ENCODE measurements at regions of chr5 and their contacts with region 1.

Region 1: DNA sequence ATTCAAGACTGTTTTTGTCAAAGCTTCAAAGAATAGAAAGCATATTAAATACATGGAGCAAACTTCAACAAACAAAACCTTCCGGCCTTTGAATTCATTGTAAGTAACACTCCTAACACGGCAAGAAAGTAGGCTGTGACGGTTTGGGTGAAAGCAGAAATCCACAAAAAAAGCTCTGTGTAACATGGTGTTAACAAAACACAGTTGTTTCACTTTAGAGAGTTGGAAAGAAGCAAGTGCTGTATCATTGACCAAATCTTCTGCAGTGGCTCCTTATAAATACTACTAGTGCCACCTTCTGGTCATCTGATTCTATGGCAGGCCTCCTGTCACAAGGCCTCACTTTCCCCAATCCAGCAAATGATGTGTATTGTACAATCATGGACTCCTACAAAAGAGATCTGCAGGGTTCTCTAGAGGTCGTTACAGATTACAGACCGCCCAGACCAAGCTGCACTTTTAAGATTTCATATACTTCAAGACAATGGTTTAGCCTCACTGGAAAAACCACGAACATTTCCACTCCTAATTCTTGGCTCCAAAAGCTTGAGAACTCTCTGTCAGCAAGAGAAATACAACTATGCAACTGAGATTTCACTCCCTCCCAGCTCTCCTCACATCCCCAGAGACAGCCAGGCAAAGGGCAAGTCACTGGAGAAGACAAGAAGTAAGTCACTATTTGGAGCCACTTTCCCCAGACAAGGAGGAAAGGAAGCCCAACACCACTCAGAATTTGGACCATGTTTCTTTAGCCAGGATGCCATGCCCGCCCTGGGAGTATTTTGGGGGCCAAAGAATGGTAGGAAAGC is 196.2 kb downstream of the DTWD2 start:
- DNase-seq: peak in 1 of 2 donors; percentile 41
- ATAC-seq: peak; percentile 72 to 93 (median 84)
- H3K4me3 ChIP-seq: peak overlapping the region in 3 of 10 donors; percentile 3 to 24 (median 11)
- H3K27ac ChIP-seq: peak overlapping the region in 3 of 10 donors; percentile 16 to 48 (median 25)
- H3K4me1 ChIP-seq: peaks cover 0 to 26% (median 9%) of the 10 kb centered on the region in 9 donors
- H3K27me3 ChIP-seq: no peaks in the 10 kb centered on the region
- CTCF ChIP-seq: peak; percentile 64 to 92 (median 80)

Region 2: DNA sequence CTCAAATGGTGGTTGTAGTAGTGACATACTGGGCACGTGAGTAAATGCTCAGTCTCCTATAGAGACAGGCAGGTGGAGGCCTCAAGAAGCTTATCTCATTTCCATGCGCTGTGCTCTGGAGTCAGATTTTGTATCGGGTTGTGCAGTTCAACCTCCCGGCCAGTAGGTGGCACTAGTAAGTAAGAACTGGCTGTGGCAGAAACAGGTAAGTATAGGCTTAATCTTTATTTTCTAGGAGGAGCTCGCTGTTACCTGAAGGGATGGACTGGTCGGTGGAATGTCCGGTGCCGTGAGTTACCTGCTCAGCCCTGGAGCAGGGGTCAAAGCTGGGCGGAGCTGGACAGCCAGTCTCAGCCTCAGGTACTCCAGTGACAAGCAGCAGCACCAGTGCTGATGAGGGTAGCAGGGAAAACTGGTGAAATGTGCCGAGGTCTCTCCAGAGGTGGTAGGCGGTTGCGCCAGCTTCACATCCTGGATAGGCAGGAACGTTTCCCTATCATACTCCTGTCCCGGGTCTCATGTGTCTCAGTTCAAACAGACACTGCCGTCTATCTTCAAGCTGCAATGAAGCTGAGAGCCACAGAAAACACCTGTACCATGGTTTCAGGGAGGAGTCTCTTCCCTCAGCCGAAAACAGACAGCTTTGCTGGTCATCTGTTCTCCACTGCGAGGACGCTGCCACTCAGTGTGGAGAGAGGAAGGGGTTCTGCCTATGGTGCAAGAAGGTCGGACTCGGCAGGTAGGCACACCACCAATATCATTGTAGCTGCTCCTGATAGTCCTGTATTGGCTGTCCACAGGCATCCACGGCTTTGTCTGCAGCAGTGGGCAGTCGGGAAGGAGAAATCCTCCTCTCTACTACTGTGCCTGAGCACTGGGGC is 1337.2 kb before region 1 on chr5:
- intact Hi-C with region 1: loop called in 6 of 10 experiments (anchors 5 to 10 kb)
- DNase-seq: peak in 1 of 2 donors; percentile 14
- ATAC-seq: peak in 6 of 8 donors; percentile 35 to 50 (median 40)
- H3K4me3 ChIP-seq: peak overlapping the region in 7 of 10 donors; percentile 5 to 27 (median 18)
- H3K27ac ChIP-seq: no peak overlapping the region
- H3K4me1 ChIP-seq: no peaks in the 10 kb centered on the region
- H3K27me3 ChIP-seq: no peaks in the 10 kb centered on the region
- CTCF ChIP-seq: peak; percentile 65 to 85 (median 78)

Region 3: DNA sequence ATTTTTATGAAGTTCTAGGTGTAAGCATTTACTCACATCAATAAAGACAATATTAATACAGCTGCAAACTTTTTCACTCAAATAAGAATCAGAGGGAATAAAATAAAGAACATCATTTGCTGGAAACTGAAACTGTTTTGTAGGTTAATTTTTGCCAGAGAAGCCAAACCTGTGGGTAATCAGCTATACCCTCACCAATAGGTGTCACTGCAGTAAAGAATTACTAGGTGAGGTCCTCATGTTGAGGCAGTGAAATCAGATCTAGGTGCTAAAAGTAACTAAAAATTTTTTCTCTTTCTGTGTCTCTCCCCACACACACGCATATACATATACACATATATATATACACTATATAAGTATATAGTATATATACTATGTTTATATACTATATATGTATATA is 1201.2 kb before region 1 on chr5:
- intact Hi-C with region 1: loop called in 1 of 10 experiments (anchors 10 kb)
- DNase-seq: no peak
- ATAC-seq: no peak
- H3K4me3 ChIP-seq: no peak overlapping the region
- H3K27ac ChIP-seq: no peak overlapping the region
- H3K4me1 ChIP-seq: no peaks in the 10 kb centered on the region
- H3K27me3 ChIP-seq: no peaks in the 10 kb centered on the region
- CTCF ChIP-seq: peak in 7 of 9 donors; percentile 39 to 61 (median 55)

Region 4: DNA sequence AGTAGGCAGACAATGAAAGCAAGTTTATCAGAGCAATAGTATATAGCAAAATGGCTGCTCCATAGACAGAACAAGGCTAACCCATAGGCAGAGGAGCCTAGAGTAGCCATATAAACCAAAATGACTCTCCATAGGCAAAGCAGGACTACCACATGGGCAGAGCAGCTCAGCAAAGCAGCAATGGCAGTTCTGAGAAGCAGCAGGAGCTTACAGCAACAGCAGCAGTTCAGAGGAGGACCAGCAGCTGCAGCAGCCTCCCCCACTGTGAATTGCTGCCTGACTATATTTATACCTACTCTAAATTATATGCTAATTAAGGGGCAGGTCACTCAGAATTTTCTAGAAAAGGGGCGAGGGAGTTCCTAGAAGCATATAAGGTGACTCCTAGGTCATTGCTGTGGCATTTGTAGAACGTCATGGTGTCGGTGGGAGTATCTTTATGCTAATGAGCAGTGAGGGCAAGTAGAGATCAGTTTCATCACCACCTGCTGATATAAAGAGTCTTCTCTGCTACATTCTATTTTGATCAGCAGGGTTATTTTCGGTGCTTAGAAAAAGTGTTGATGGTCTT is 919.2 kb before region 1 on chr5:
- intact Hi-C with region 1: loop called in 1 of 10 experiments (anchors 10 kb)
- DNase-seq: no peak
- ATAC-seq: no peak
- H3K4me3 ChIP-seq: no peak overlapping the region
- H3K27ac ChIP-seq: no peak overlapping the region
- H3K4me1 ChIP-seq: no peaks in the 10 kb centered on the region
- H3K27me3 ChIP-seq: no peaks in the 10 kb centered on the region
- CTCF ChIP-seq: no peak

Region 5: GRCh38 chr5:118726891-118727290 is 65.2 kb before region 1 on chr5:
- intact Hi-C with region 1: no loop called
- DNase-seq: no peak
- ATAC-seq: no peak
- H3K4me3 ChIP-seq: no peak overlapping the region
- H3K27ac ChIP-seq: no peak overlapping the region
- H3K4me1 ChIP-seq: no peaks in the 10 kb centered on the region
- H3K27me3 ChIP-seq: no peaks in the 10 kb centered on the region
- CTCF ChIP-seq: no peak

Region 6: GRCh38 chr5:119229950-119230349 is 437.8 kb after region 1 on chr5:
- intact Hi-C with region 1: no loop called
- DNase-seq: no peak
- ATAC-seq: no peak
- H3K4me3 ChIP-seq: no peak overlapping the region
- H3K27ac ChIP-seq: no peak overlapping the region
- H3K4me1 ChIP-seq: no peaks in the 10 kb centered on the region
- H3K27me3 ChIP-seq: no peaks in the 10 kb centered on the region
- CTCF ChIP-seq: no peak

Region 7: DNA sequence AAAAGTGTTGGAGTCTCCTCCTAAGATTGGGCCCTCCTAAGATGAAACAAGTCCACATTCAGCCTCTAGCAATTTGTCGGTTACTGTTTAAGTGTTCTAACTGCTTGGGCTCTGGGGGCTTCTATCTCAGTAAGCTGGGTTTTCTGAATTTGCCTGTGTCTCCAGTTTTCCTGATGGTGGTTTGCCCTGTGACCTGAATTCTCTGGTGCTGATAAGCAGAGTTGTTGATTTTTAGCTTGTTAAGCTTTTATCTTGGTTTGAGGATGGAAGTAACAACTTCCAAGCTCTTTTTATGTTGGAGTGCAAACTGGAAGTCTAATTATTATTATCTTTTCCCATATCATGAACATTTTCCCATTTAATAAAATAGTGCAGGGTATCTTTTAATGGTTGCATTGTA is 691.0 kb after region 1 on chr5:
- intact Hi-C with region 1: no loop called
- DNase-seq: no peak
- ATAC-seq: no peak
- H3K4me3 ChIP-seq: no peak overlapping the region
- H3K27ac ChIP-seq: no peak overlapping the region
- H3K4me1 ChIP-seq: peaks cover 0 to 3% (median 0%) of the 10 kb centered on the region in 9 donors
- H3K27me3 ChIP-seq: no peaks in the 10 kb centered on the region
- CTCF ChIP-seq: no peak

Region 8: DNA sequence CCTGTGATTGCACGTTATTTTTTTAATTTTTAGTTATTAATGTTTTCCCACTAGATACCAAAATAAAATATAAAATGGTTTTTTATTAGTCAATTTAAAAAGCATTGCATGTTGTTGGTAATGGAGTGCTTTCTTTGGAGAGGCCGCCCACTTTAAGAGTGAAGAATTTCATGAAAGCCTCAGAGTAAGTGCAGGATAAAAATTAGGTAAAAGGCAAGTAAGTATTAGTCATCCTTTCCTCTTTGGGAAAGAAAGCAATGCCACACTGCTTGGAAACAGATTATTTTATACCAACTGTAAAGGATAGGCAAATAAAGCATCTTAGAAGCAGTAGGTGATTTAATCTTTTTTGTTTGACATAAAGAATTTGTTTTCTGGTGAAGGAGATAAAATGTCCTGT is 723.1 kb after region 1 on chr5:
- intact Hi-C with region 1: no loop called
- DNase-seq: no peak
- ATAC-seq: no peak
- H3K4me3 ChIP-seq: no peak overlapping the region
- H3K27ac ChIP-seq: no peak overlapping the region
- H3K4me1 ChIP-seq: no peaks in the 10 kb centered on the region
- H3K27me3 ChIP-seq: no peaks in the 10 kb centered on the region
- CTCF ChIP-seq: no peak

Measured in heart right ventricle (tissue), 16 donors.